Aorta (tissue), 5 donors: ENCODE measurements at regions of chr1 and their contacts with region 1.

Region 1: GRCh38 chr1:220810179-220810653 is 23.5 kb downstream of the MTARC1 start:
- DNase-seq: peak; percentile 89 to 93
- ATAC-seq: peak; percentile 94
- H3K4me3 ChIP-seq: no peak overlapping the region
- H3K27ac ChIP-seq: no peak overlapping the region
- H3K4me1 ChIP-seq: no peaks in the 10 kb centered on the region
- H3K27me3 ChIP-seq: no peaks in the 10 kb centered on the region

Region 2: DNA sequence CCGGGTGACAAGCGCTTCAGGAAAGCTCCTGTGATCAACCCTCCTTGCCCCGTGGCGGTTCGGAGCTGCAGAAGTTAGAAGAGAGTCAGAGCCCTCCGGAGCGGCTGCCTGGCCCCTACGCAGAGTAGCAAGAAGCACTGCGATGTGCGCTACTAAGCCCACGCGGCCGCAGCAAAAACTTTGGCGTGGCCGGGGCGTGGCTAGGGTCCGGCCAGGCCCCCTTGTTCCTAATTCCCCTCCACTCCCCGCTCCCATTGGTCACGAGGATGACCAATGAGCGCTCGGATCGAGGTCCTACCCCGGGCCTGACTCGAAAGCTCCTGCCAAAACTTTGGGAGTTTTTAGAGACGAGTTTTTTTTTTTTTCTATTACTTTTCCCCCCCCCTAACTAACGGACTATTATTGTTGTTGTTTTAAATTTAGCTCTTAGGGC is 68.9 kb after region 1 on chr1 and contains the start of gene HLX:
- intact Hi-C with region 1: loop called in 1 of 2 experiments (anchors 5 kb)
- DNase-seq: peak; percentile 97
- ATAC-seq: peak; percentile 95
- H3K4me3 ChIP-seq: peak within 1 kb of the TSS; percentile 72 to 84
- H3K27ac ChIP-seq: peak within 1 kb of the TSS in 1 of 2 donors; percentile 60
- H3K4me1 ChIP-seq: no peaks in the 10 kb centered on the region
- H3K27me3 ChIP-seq: no peaks in the 10 kb centered on the region
- total RNA-seq, gene HLX: 13.1 to 21.6 TPM